GM10248 (cell line): ENCODE measurements at regions of chr14 and their contacts with region 1.

Region 1: DNA sequence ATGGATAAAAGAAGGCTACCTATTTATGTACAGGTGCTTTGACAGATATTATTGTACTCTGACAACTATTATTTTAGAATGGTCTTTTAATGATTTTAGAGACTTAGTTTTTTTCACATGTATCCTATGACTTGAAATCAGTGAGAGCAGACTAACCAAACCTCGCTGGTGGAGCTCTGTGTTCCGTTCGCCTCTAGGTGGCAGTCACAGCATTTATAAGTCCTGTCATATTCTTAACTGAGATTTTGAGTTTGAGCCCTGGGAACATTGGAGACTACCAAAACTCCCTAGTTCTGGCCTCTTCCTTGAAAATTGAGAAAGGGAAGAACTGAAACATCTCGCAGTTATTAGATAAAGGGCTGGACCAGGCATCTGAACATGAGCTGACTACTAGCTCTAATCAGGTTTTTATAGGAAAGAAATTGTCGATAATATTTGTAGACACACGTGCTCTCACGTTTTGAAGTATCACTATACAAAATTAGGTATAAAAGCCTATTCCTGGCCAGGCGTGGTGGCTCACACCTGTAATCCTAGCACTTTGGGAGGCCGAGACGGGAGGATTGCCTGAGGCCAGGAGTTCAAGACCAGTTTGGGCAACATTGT is 48.3 kb downstream of the TTLL5 start:
- DNase-seq: peak; percentile 66
- CTCF ChIP-seq: peak; percentile 82

Region 2: GRCh38 chr14:75333606-75334548 is 375.4 kb before region 1 on chr14:
- CTCF ChIA-PET with region 1: no interaction called
- POLR2A ChIA-PET with region 1: no interaction called
- DNase-seq: peak; percentile 56
- CTCF ChIP-seq: no peak

Region 3: DNA sequence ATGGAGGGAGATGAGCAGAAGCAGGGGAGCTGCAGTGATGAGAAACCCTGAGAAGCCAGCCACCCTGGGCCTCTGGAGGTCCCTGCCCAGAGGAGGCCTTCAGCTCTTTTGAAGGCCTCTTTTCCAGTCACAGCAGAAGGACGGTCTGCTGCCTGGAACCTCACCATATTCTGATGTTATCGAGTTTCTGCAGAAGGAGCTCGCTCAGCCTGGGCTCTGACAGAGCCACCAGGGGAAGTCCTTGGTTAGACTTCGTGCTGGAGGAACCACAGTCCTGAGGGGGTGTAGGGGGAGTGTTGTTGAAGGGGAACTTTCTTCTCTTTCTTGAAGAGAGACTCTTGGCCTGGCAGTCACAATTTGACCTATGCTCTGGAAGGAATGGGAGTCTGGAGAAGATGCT is 212.1 kb before region 1 on chr14:
- CTCF ChIA-PET with region 1: no interaction called
- POLR2A ChIA-PET with region 1: no interaction called
- DNase-seq: peak; percentile 65
- CTCF ChIP-seq: peak; percentile 14

Region 4: DNA sequence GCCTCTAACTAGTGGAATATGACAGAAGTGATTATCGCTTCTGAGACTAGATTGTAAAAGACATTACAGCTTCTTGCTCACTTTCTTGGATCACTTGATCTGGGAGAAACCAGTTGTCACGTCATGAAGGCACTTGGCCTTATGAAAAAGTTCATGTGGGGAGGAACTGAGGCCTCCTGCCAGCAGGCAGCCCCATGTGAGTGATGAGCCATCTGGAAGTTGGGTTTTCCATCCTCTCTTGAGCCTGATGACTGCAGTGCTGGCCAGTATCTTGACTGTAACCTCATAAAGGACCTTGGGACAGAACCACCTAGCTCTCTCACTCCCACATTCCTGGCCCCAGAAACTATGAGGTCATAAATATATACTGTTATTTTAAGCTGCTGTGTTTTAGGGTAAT is 20.3 kb before region 1 on chr14:
- CTCF ChIA-PET with region 1: interaction called, 30 read pairs
- POLR2A ChIA-PET with region 1: no interaction called
- DNase-seq: no peak
- CTCF ChIP-seq: no peak

Region 5: GRCh38 chr14:75738192-75738591 is 28.9 kb after region 1 on chr14:
- CTCF ChIA-PET with region 1: interaction called, 30 read pairs
- POLR2A ChIA-PET with region 1: no interaction called
- DNase-seq: no peak
- CTCF ChIP-seq: no peak

Region 6: DNA sequence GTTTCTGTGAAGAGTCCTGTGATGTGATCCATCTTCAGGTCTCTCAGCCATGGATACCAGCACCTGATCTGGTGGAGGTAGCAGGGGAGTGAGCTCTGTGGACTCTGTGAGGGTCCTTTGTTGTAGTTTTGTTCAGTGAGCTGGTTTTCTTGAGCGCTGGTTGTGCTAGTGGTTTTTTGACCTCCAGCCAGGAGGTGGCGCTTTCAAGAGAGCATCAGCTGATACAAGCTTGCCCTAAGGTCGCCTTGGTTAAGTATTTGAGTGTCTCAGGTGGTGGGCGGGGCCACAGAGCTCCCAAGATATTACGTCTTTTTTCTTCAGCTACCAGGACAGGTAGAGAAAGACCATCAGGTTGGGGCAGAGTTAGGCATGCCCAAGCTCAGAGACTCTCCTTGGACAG is 91.5 kb after region 1 on chr14:
- CTCF ChIA-PET with region 1: interaction called, 28 read pairs
- POLR2A ChIA-PET with region 1: no interaction called
- DNase-seq: no peak
- CTCF ChIP-seq: no peak

Region 7: DNA sequence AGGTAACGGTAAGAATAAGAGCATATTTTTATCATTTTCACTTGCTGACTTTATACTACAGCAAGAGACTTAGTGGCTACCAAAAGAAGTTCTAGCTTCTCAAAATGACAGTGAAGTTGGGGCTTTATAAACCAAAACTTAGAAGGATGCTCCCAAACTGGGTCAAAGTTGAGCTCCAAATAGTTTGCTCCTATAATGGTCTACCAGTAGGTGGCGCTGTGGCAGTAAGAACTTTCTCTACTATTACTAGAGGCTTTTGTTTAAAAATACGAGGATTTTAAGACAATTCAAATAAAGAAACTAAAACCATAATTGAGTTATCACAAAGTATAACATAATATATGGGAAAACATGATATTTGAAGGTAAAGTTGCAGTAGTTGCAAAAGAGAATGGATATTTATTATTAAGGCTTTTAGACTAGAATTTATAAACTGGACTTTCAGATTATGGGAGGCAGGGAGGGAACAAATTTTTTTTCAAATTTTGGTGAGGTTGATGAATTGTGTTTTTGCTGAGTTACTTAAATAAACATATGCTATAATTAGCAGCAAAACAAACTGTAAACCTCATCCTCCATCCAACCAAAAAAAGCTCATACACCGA is 197.5 kb after region 1 on chr14:
- CTCF ChIA-PET with region 1: interaction called, 22 read pairs
- POLR2A ChIA-PET with region 1: no interaction called
- DNase-seq: peak; percentile 62
- CTCF ChIP-seq: peak; percentile 72

Region 8: GRCh38 chr14:75982266-75983018 is 273.1 kb after region 1 on chr14:
- CTCF ChIA-PET with region 1: interaction called, 216 read pairs
- POLR2A ChIA-PET with region 1: interaction called, 11 read pairs
- DNase-seq: peak; percentile 82
- CTCF ChIP-seq: peak; percentile 84

Region 9: GRCh38 chr14:76386915-76387782 is 677.8 kb after region 1 on chr14:
- CTCF ChIA-PET with region 1: interaction called, 17 read pairs
- POLR2A ChIA-PET with region 1: no interaction called
- DNase-seq: peak; percentile 87
- CTCF ChIP-seq: peak; percentile 98